Testis (tissue), 5 donors: ENCODE measurements at regions of chr4 and their contacts with region 1.

Region 1: DNA sequence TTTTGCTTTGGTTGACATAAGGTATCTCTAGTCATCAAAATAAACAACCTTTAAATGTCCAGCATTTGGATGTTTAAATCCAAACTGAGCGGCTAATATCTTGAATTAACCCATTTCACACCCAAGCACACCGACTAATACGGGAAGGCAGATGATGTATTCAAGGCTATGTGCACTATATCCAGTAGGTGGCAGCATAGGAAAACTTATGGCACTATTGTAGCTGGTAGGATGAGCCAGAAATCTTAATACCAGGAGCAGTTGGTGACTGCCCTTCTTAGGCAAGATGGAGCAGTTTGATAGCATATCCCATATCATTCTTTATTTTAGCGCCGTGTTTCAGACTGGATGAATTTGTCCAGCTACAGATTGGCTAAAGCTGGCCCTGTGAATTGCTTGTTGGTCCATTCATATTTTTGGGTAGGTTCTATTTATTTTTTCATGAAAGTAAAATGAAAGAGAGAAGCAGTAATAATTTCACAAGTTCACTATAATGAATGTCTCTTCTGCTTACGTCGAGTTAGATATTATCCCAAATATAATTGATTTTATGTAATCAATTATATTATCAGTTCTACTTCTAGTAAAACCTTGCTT is 24.4 kb downstream of the UCHL1 start:
- DNase-seq: peak; percentile 64
- H3K4me3 ChIP-seq: peak overlapping the region in 1 of 2 donors; percentile 3
- H3K27ac ChIP-seq: no peak overlapping the region
- H3K4me1 ChIP-seq: peaks cover 4% of the 10 kb centered on the region
- H3K27me3 ChIP-seq: no peaks in the 10 kb centered on the region
- CTCF ChIP-seq: peak; percentile 83 to 88 (median 86)
- POLR2A ChIP-seq: no peak

Region 2: GRCh38 chr4:40699648-40700047 is 581.5 kb before region 1 on chr4:
- intact Hi-C with region 1: no loop called
- DNase-seq: no peak
- H3K4me3 ChIP-seq: no peak overlapping the region
- H3K27ac ChIP-seq: no peak overlapping the region
- H3K4me1 ChIP-seq: no peaks in the 10 kb centered on the region
- H3K27me3 ChIP-seq: no peaks in the 10 kb centered on the region
- CTCF ChIP-seq: no peak
- POLR2A ChIP-seq: no peak

Region 3: GRCh38 chr4:41525129-41525528 is 244.0 kb after region 1 on chr4:
- intact Hi-C with region 1: no loop called
- DNase-seq: no peak
- H3K4me3 ChIP-seq: no peak overlapping the region
- H3K27ac ChIP-seq: no peak overlapping the region
- H3K4me1 ChIP-seq: no peaks in the 10 kb centered on the region
- H3K27me3 ChIP-seq: no peaks in the 10 kb centered on the region
- CTCF ChIP-seq: no peak
- POLR2A ChIP-seq: no peak

Region 4: DNA sequence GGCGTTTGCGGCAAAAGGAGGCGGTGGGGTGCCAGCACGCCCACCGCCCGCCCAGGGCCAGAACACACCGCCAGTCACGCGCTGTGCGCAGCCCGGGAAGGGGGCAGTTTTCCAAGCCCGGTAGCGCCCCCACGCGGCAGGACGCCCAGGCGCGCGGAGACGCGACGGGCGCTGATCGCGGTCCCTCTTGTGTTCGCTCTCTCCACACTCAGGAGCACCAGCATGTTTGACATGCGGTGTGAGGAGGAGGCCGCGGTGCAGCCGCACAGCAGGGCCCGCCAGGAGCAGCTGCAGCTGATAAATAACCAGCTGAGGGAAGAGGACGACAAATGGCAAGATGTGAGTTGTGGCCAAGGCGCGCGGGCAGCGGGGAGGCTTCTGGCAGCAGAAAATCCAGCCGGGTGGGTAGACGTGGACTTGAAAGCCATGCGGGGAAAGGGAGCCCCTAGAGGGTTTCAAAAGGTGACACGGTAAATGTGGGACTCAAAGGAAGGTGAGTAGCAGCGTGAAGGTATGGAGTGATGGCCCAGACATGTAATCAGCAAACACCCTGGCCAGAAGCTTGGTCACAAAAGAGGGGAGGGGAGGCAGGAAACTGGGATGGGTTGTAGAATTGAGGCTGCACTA is 363.3 kb after region 1 on chr4:
- intact Hi-C with region 1: loop called (anchors 5 kb)
- DNase-seq: peak; percentile 84
- H3K4me3 ChIP-seq: peak overlapping the region; percentile 10 to 11
- H3K27ac ChIP-seq: no peak overlapping the region
- H3K4me1 ChIP-seq: no peaks in the 10 kb centered on the region
- H3K27me3 ChIP-seq: no peaks in the 10 kb centered on the region
- CTCF ChIP-seq: peak; percentile 66 to 92 (median 82)
- POLR2A ChIP-seq: no peak